ENCODE measurements at regions of chr1 and their contacts with region 1.

Region 1: DNA sequence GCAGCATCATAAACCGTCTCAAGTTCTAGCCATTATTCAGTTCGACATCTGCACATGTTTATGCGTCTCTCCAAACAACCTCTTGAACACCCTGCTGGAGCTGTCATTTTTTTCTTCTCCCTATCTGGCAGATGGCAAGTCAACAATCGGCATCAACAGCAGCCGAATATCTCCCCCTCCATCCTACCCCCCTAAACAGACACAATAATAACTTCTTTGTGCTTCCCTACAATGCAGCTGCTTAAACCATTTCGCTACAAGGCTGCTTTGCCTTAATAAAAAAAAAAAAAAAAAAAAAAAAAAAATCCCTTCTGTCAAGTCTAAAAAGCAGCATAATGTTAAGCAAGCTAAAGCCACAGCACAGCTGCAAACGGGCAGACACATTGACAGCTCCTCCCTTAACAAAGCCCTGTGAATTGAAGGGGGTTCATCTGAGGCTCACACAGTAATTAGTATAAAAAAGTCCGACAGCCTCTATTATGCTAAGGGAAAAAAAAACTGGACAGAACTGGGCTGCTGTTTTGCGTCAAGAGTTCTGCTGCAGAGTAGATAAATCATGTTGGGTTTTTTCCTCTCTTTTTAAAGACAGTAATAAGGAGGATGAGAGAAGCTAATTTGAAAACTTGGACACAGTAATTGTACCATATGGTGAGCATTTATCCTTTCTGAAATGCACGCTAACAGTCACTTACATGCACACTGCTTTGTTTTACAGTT is 136.4 kb downstream of the AKT3 start:
- DNase-seq: no peak
- H3K4me3 ChIP-seq: peak overlapping the region; percentile 11; the same call in 1 of the 2 replicates
- H3K27ac ChIP-seq: no peak overlapping the region
- H3K27me3 ChIP-seq: no peaks in the 10 kb centered on the region
- CTCF ChIP-seq: no peak

Region 2: DNA sequence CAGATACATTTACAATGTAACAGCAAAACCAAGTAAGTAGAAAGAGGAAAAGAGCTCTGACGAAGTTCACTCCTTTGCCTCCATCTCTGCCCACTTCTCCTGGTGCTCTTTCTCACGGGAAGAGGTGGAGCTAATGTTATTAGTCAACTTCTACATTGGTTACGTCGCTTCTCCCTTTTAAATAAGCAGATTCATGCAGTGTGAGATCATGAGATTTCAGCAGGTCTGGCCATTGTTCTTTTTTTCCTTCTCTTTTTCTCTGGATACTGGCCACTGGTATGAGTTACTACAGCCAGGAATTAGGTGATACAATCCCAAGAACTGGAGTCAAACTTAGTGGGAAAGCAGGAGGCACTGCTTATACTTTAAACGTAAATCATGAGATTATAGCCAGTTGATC is 70.7 kb before region 1 on chr1:
- CTCF ChIA-PET with region 1: no interaction called
- POLR2A ChIA-PET with region 1: no interaction called
- DNase-seq: no peak
- H3K4me3 ChIP-seq: no peak overlapping the region
- H3K27ac ChIP-seq: no peak overlapping the region
- H3K27me3 ChIP-seq: no peaks in the 10 kb centered on the region
- CTCF ChIP-seq: no peak

Region 3: DNA sequence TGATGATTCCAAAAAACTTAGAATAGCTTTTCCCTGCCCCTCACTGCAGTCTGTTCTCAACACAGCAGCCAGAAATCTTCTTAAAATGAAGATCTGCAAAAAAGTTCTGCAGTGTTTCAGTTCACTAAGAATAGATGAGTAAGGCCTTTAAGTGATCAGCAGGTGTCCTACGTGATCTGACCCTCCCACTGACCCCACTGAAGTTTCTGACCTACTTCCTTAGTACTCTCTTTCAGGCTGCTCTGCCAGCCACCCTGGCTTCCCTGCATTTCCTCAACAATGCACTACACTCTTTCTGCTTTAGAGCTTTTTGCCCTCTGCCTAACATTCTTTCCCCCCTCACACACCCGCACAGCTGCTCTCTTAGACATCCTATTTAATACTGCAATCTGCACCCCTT is 46.0 kb before region 1 on chr1:
- CTCF ChIA-PET with region 1: interaction called, 12 read pairs
- POLR2A ChIA-PET with region 1: interaction called, 4 read pairs
- DNase-seq: no peak
- H3K4me3 ChIP-seq: no peak overlapping the region
- H3K27ac ChIP-seq: no peak overlapping the region
- H3K27me3 ChIP-seq: no peaks in the 10 kb centered on the region
- CTCF ChIP-seq: no peak

Region 4: GRCh38 chr1:243731301-243731891 is 17.8 kb after region 1 on chr1:
- CTCF ChIA-PET with region 1: interaction called, 3 read pairs
- POLR2A ChIA-PET with region 1: interaction called, 10 read pairs
- DNase-seq: no peak
- H3K4me3 ChIP-seq: no peak overlapping the region
- H3K27ac ChIP-seq: no peak overlapping the region
- H3K27me3 ChIP-seq: no peaks in the 10 kb centered on the region
- CTCF ChIP-seq: no peak

Region 5: DNA sequence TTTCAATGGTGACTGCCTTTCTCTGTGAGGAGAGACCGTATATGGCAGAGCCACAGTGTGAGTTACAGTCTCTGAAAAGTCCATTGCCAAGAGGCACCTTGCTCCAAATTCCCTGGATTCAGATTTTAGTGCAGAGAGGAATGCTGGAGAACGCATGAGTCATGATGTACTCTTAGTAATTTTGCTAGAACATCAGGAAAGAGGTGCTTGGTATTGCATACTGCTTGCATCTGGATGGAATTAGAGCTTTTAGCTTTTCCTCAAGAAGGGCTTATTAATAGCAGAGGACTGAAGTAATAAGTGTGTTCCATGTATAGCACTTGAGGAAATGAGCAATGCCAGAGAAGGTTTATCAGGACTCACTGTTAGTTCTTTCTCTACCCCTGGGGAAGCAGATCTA is 176.9 kb after region 1 on chr1:
- CTCF ChIA-PET with region 1: no interaction called
- POLR2A ChIA-PET with region 1: interaction called, 11 read pairs
- DNase-seq: peak; percentile 20
- H3K4me3 ChIP-seq: no peak overlapping the region
- H3K27ac ChIP-seq: no peak overlapping the region
- H3K27me3 ChIP-seq: no peaks in the 10 kb centered on the region
- CTCF ChIP-seq: no peak

Measured in AG04450 (cell line).